ENCODE measurements at regions of chr3 and their contacts with region 1.

Region 1: GRCh38 chr3:56693750-56694149 is 10.7 kb upstream of the TASOR start:
- DNase-seq: peak; percentile 62
- H3K4me3 Mint-ChIP-seq: peak overlapping the region; percentile 65
- H3K27ac Mint-ChIP-seq: peak overlapping the region; percentile 34
- H3K4me1 Mint-ChIP-seq: peaks cover 35% of the 10 kb centered on the region
- H3K27me3 Mint-ChIP-seq: no peaks in the 10 kb centered on the region

Region 2: GRCh38 chr3:56682462-56683121 is 11.2 kb before region 1 on chr3:
- intact Hi-C with region 1: loop called (anchors 1 kb)
- DNase-seq: peak; percentile 94
- H3K4me3 Mint-ChIP-seq: peak overlapping the region; percentile 100
- H3K27ac Mint-ChIP-seq: peak overlapping the region; percentile 99
- H3K4me1 Mint-ChIP-seq: peaks cover 29% of the 10 kb centered on the region
- H3K27me3 Mint-ChIP-seq: no peaks in the 10 kb centered on the region

Region 3: DNA sequence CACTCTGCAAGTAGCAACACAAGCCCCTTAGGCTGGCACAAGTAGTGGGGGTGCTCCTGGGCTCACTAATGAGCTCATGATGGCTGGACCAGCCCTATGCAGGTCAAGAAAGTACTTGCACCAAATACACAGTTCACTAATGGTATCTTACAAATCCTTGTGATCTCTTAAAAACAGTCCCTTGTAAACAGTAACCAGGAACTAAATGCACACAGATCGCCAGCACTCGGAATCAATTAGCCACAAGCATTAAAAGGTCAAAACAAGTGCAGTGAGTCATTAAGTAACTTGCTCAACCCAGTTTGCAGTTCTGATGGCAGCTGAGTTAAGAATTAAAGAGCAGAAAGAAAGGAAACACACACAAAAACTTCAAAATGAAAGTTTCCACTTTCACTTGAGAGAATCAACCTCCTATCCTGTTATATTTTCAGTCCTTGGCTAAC is 64.8 kb after region 1 on chr3:
- intact Hi-C with region 1: loop called (anchors 2 kb)
- DNase-seq: peak; percentile 80
- H3K4me3 Mint-ChIP-seq: peak overlapping the region; percentile 77
- H3K27ac Mint-ChIP-seq: peak overlapping the region; percentile 90
- H3K4me1 Mint-ChIP-seq: peaks cover 75% of the 10 kb centered on the region
- H3K27me3 Mint-ChIP-seq: no peaks in the 10 kb centered on the region